ENCODE measurements at regions of chr5 and their contacts with region 1.

Region 1: GRCh38 chr5:135887351-135887864 is 8.2 kb downstream of the IL9 start:
- DNase-seq: peak; percentile 83
- ATAC-seq: peak; percentile 77
- H3K4me3 Mint-ChIP-seq: no peak overlapping the region
- H3K27ac Mint-ChIP-seq: no peak overlapping the region
- H3K4me1 Mint-ChIP-seq: peaks cover 20% of the 10 kb centered on the region
- H3K27me3 Mint-ChIP-seq: peaks cover 40% of the 10 kb centered on the region

Region 2: DNA sequence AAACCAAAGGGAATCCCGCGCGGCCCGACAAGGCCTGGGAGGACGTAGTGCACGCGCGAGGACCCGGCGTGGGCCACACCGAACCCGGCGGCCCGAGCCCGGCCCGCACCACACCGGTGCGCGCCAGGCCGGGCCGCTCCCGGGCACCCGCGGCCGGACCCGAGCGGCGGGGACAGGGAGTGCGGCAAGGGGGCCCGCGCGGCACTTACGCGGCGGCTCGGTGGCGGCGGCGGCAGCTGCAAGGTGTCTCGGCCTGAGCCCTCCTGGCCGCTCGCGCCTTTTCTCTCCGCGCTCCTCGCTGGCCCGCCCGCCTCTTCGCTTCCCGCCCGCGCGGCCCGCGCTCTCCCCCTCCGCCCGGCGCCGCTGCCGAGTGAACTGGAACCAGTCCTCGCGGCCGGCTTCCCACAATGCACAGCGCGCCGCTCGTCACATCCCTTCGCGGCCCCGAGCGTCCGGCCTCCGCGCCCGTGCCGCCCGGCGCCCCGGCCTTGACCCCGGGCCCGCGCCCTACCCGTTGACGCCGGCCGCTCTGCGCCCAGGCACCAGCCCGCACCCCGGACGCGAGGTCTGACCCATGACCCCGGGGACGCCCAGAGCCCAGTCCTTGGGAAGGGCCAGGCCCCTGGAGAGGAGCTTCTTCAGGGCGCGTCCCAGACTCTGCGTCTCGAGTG is 488.4 kb before region 1 on chr5 and contains the start of gene MACROH2A1:
- CTCF ChIA-PET with region 1: no interaction called
- POLR2A ChIA-PET with region 1: no interaction called
- intact Hi-C with region 1: no loop called
- DNase-seq: peak; percentile 92
- ATAC-seq: peak; percentile 88
- H3K4me3 Mint-ChIP-seq: peak within 1 kb of the TSS; percentile 86
- H3K27ac Mint-ChIP-seq: peak within 1 kb of the TSS; percentile 91
- H3K4me1 Mint-ChIP-seq: peaks cover 41% of the 10 kb centered on the region
- H3K27me3 Mint-ChIP-seq: no peaks in the 10 kb centered on the region
- total RNA-seq, gene MACROH2A1: 159 to 190 TPM

Region 3: GRCh38 chr5:135944967-135945560 is 57.7 kb after region 1 on chr5:
- CTCF ChIA-PET with region 1: interaction called, 4 read pairs
- POLR2A ChIA-PET with region 1: no interaction called
- intact Hi-C with region 1: loop called (anchors 2 to 5 kb)
- DNase-seq: peak; percentile 45
- ATAC-seq: no peak
- H3K4me3 Mint-ChIP-seq: no peak overlapping the region
- H3K27ac Mint-ChIP-seq: no peak overlapping the region
- H3K4me1 Mint-ChIP-seq: no peaks in the 10 kb centered on the region
- H3K27me3 Mint-ChIP-seq: peaks cover 18% of the 10 kb centered on the region

Region 4: GRCh38 chr5:136062366-136063274 is 175.2 kb after region 1 on chr5:
- CTCF ChIA-PET with region 1: interaction called, 3 read pairs
- POLR2A ChIA-PET with region 1: no interaction called
- intact Hi-C with region 1: loop called (anchors 1 kb)
- DNase-seq: peak; percentile 51
- ATAC-seq: peak; percentile 86
- H3K4me3 Mint-ChIP-seq: no peak overlapping the region
- H3K27ac Mint-ChIP-seq: no peak overlapping the region
- H3K4me1 Mint-ChIP-seq: no peaks in the 10 kb centered on the region
- H3K27me3 Mint-ChIP-seq: peaks cover 2% of the 10 kb centered on the region

Region 5: DNA sequence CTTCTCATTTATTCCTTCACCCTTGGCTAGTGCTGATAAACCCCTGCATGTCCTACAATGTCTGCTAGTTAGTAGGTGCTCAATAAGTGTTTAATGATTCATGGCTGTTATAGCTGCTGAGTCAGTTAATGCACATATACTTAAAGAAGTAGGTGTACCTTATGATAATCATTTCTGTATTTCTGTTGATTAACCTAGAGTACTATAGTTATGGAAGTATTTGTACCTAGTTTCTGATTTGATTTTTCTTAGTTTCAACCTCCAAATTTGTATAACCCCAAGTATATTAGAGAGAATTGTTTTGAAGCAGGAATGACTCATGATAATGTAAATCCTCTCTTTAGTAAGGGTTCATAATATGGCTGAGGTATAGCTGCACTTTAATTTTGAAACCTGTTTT is 254.2 kb after region 1 on chr5:
- CTCF ChIA-PET with region 1: no interaction called
- POLR2A ChIA-PET with region 1: no interaction called
- intact Hi-C with region 1: loop called in 1 of 2 experiments (anchors 10 kb)
- DNase-seq: no peak
- ATAC-seq: peak; percentile 85
- H3K4me3 Mint-ChIP-seq: no peak overlapping the region
- H3K27ac Mint-ChIP-seq: no peak overlapping the region
- H3K4me1 Mint-ChIP-seq: peaks cover 11% of the 10 kb centered on the region
- H3K27me3 Mint-ChIP-seq: peaks cover 9% of the 10 kb centered on the region

Region 6: GRCh38 chr5:136212252-136212721 is 324.9 kb after region 1 on chr5:
- CTCF ChIA-PET with region 1: interaction called, 3 read pairs
- POLR2A ChIA-PET with region 1: no interaction called
- intact Hi-C with region 1: loop called (anchors 1 kb)
- DNase-seq: peak; percentile 72
- ATAC-seq: no peak
- H3K4me3 Mint-ChIP-seq: no peak overlapping the region
- H3K27ac Mint-ChIP-seq: no peak overlapping the region
- H3K4me1 Mint-ChIP-seq: no peaks in the 10 kb centered on the region
- H3K27me3 Mint-ChIP-seq: peaks cover 28% of the 10 kb centered on the region

Region 7: GRCh38 chr5:136769900-136770684 is 882.7 kb after region 1 on chr5:
- CTCF ChIA-PET with region 1: no interaction called
- POLR2A ChIA-PET with region 1: no interaction called
- intact Hi-C with region 1: loop called in 1 of 2 experiments (anchors 5 kb)
- DNase-seq: peak; percentile 68
- ATAC-seq: peak; percentile 64
- H3K4me3 Mint-ChIP-seq: no peak overlapping the region
- H3K27ac Mint-ChIP-seq: no peak overlapping the region
- H3K4me1 Mint-ChIP-seq: no peaks in the 10 kb centered on the region
- H3K27me3 Mint-ChIP-seq: no peaks in the 10 kb centered on the region